ENCODE measurements at regions of chr18 and their contacts with region 1.

Region 1: DNA sequence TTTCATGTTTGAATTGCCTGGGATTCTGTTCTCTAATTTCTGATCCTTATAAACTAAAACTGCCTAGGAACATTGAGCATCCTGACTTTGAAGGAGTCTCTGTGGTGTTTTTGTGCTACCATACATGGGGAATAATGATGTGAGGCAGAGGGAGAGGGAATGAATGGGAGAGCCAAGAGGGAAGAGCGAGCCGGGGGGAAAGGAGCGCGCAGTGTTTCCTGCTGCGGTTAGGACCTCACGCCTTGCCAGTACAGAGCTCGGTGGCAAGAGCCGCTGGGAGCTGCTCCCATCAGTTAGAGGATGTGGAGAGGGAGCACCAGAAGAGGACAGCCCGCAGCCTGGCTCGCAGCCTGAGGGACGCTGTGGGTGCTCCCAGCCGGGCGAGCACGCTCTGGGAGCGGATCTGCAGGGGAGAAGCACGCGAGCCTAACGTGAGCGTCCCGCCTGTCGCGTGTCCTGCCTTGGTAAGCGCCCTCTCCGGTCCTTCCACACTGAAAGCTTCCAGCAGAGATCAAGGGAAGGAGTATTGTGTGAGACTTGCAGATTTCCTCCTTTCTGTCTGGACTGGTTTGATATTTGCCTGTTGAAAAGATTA is 114.7 kb downstream of the FAM210A start:
- DNase-seq: peak; percentile 26
- H3K4me3 Mint-ChIP-seq: peak overlapping the region; percentile 71
- H3K27ac Mint-ChIP-seq: no peak overlapping the region
- H3K4me1 Mint-ChIP-seq: peaks cover 74% of the 10 kb centered on the region
- H3K27me3 Mint-ChIP-seq: no peaks in the 10 kb centered on the region

Region 2: GRCh38 chr18:12883684-12884405 is 727.9 kb before region 1 on chr18 and contains the start of gene PTPN2:
- CTCF ChIA-PET with region 1: no interaction called
- intact Hi-C with region 1: loop called (anchors 10 kb)
- DNase-seq: peak; percentile 92
- H3K4me3 Mint-ChIP-seq: peak within 1 kb of the TSS; percentile 89
- H3K27ac Mint-ChIP-seq: peak within 1 kb of the TSS; percentile 90
- H3K4me1 Mint-ChIP-seq: peaks cover 53% of the 10 kb centered on the region
- H3K27me3 Mint-ChIP-seq: no peaks in the 10 kb centered on the region
- total RNA-seq, gene PTPN2: 68.5 to 71.8 TPM

Region 3: DNA sequence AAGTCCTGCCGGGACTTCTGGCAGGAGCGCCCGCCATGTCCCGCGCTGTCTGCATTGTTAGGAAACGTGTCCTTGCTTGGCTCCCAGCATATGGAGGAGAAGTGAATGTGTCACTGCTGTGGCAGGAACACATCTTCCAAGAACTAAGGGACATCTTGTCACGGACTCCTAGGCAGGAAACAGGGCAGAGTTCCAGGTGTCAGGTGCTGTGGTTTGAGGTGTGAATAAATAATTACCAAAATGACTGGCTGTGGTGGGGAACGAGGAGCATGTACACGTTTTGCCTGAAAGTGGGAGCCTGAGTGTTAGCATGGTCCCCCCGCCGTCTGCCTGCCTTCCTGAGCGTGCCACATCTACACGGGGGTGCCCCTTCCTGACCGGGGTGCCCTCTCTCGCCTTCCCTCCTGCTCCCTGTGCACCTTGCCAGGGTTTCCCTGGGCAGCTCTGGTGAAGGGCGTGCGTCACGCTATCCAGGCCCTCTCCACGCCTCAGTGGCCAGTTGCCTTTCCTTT is 155.7 kb before region 1 on chr18:
- CTCF ChIA-PET with region 1: no interaction called
- intact Hi-C with region 1: loop called (anchors 5 kb)
- DNase-seq: peak; percentile 85
- H3K4me3 Mint-ChIP-seq: peak overlapping the region; percentile 33
- H3K27ac Mint-ChIP-seq: no peak overlapping the region
- H3K4me1 Mint-ChIP-seq: peaks cover 25% of the 10 kb centered on the region
- H3K27me3 Mint-ChIP-seq: no peaks in the 10 kb centered on the region

Region 4: GRCh38 chr18:13577091-13577697 is 34.5 kb before region 1 on chr18:
- CTCF ChIA-PET with region 1: interaction called, 3 read pairs
- intact Hi-C with region 1: loop called (anchors 1 kb)
- DNase-seq: peak; percentile 71
- H3K4me3 Mint-ChIP-seq: peak overlapping the region; percentile 5
- H3K27ac Mint-ChIP-seq: peak overlapping the region; percentile 55
- H3K4me1 Mint-ChIP-seq: peaks cover 36% of the 10 kb centered on the region
- H3K27me3 Mint-ChIP-seq: no peaks in the 10 kb centered on the region

Region 5: DNA sequence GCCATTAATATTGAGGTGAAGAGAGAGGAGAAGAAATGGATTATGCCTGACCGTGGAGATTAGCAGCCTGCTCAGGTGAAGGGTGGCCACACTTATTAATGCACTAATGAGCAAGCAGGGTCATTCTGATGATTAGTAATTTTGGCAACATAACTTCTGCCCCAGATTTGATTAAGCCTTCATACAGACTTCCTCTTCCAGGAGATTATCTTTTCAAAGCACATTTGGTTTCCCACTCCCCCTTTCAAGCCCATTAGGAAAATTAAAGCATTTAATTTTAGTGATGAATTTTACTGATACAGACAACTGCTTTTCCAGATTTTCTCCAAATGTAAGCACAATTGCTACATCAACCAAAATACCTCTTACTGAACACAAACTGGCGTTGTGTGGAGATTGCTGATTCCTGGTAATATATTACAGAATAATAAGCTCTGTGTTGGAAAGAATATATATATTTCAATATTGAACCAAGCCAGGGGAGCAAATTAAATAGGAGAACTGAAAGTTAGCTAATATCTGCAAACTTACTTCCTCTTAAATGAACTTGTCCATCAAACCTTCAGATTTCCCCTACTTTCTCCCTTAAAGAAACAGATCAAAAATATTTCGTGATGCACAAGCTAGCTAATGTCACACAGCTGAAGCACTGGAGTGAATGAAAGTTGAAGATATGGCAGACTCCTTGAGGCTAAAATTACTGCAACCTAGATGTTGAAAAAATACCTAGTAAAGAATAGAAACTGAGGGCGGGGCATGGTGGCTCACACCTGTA is 26.1 kb before region 1 on chr18:
- CTCF ChIA-PET with region 1: interaction called, 5 read pairs
- intact Hi-C with region 1: loop called (anchors 1 kb)
- DNase-seq: no peak
- H3K4me3 Mint-ChIP-seq: no peak overlapping the region
- H3K27ac Mint-ChIP-seq: no peak overlapping the region
- H3K4me1 Mint-ChIP-seq: peaks cover 44% of the 10 kb centered on the region
- H3K27me3 Mint-ChIP-seq: no peaks in the 10 kb centered on the region